ENCODE measurements at regions of chr19 and their contacts with region 1.

Region 1: GRCh38 chr19:11766597-11767591 is at the start of gene ZNF441:
- DNase-seq: peak; percentile 87
- H3K4me3 Mint-ChIP-seq: peak within 1 kb of the TSS; percentile 95
- H3K27ac Mint-ChIP-seq: peak within 1 kb of the TSS; percentile 95
- H3K4me1 Mint-ChIP-seq: peaks cover 11% of the 10 kb centered on the region
- H3K27me3 Mint-ChIP-seq: no peaks in the 10 kb centered on the region
- total RNA-seq, gene ZNF441: 2.8 and 4.4 TPM in 2 replicates

Region 2: GRCh38 chr19:11738746-11739620 is 27.9 kb before region 1 on chr19 and contains the start of gene ZNF823:
- intact Hi-C with region 1: loop called (anchors 1 kb)
- DNase-seq: peak; percentile 91
- H3K4me3 Mint-ChIP-seq: peak within 1 kb of the TSS; percentile 98
- H3K27ac Mint-ChIP-seq: peak within 1 kb of the TSS; percentile 92
- H3K4me1 Mint-ChIP-seq: peaks cover 19% of the 10 kb centered on the region
- H3K27me3 Mint-ChIP-seq: peaks cover 3% of the 10 kb centered on the region
- total RNA-seq, gene ZNF823: 2.5 and 2.8 TPM in 2 replicates

Region 3: DNA sequence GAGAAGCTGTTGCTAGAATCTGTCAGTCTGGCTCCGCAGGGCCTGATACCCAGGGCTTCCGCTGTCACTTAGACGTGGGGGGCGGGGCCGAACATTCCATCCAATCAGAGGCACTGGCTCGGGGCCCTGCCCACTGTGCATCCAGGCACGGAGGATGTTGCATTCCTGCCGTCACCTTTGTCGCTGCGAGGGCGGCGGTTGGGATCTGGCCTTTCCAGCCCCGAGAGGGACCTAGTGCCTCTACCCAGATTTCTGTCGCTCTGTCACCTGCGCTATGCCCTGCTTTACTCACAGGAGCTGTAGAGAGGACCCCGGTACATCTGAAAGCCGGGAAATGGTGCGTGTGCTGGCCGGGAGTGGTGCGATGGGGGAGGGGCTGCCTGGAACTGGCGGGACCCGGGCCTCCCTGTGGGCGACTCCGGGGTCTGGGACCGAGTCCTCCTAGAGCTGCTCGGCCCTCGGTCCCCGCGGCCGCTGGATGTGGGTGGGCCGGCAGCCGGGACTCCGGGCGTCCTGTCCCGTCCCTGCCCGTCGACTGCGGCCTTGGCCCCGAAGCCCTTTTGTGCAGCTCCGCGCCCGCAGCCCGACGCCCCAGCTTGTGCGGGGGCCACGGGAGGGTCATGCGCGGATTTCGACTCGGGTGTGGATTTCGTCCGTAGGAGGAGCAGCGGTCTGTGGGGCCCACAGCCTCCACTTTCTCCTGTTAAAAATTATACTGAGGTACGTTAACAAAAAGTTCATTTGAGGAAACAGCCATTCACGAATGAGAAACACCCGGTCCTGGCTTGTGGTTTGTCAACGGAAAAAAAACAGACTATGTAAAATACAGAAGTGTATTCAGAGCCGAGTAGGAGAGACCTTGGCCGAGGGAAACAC is 81.9 kb after region 1 on chr19 and contains the start of gene ZNF439:
- intact Hi-C with region 1: no loop called
- DNase-seq: peak; percentile 76
- H3K4me3 Mint-ChIP-seq: peak within 1 kb of the TSS; percentile 75
- H3K27ac Mint-ChIP-seq: peak within 1 kb of the TSS; percentile 73
- H3K4me1 Mint-ChIP-seq: peaks cover 15% of the 10 kb centered on the region
- H3K27me3 Mint-ChIP-seq: no peaks in the 10 kb centered on the region
- total RNA-seq, gene ZNF439: 3.3 and 3.6 TPM in 2 replicates

Measured in activated T-helper 1 cell treated with anti-CD3 and anti-CD28 coated beads, Interleukin-12 subunit alpha, Interleukin-12 subunit beta, Interleukin-2, Interleukin-4 antibody, amounts not matched to agents 30 ng/mL and 10 ng/mL and 1 ng/mL, durations not matched to agents 14 hours and 24 hours and 36 hours (primary cell).